Psoas muscle (tissue), 8 donors: ENCODE measurements at regions of chr10 and their contacts with region 1.

Region 1: DNA sequence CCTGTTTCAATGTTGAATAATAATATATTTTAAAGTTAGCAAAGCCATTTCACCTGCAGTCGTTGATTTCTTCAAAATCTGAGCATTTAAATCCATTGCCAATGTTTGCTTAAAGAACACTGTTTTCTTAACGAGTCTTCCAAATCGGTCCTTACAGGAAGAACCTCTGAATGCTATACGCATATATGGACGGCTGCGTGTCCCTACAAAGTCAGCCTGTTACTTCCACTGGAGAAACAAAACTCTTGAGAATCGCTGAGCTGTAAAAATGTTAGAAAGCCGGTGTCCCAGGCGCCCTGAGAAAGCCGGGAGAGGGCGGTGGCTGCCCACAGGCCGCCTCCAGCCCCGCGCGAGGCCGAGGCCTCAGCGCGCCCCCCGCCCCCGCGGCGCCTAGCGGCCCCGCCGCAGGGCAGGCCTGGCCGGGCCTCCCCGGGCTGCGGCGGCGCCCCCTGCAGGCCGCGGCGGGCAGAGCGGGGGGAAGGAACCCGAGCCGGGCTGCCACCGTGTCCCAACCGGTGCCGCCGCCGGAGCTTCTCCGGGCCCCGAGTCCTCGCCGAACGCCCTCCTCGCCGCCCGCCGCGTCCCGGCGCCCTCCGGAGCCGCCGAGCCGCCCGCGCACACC is at the start of gene FHIP2A:
- DNase-seq: peak; percentile 87 to 90
- ATAC-seq: peak; percentile 79 to 94 (median 92)
- H3K4me3 ChIP-seq: peak within 1 kb of the TSS; percentile 93
- H3K27ac ChIP-seq: peak within 1 kb of the TSS; percentile 98
- H3K4me1 ChIP-seq: peaks cover 30% of the 10 kb centered on the region
- H3K27me3 ChIP-seq: no peaks in the 10 kb centered on the region
- CTCF ChIP-seq: peak; percentile 83
- total RNA-seq, gene FHIP2A: 19.9 to 31.9 (median 26.0) TPM

Region 2: GRCh38 chr10:114937962-114938855 is 116.8 kb after region 1 on chr10 and contains the start of gene TRUB1:
- intact Hi-C with region 1: loop called in 1 of 2 experiments (anchors 10 kb)
- DNase-seq: peak; percentile 92 to 95
- ATAC-seq: peak; percentile 97 to 99 (median 98)
- H3K4me3 ChIP-seq: peak within 1 kb of the TSS; percentile 91
- H3K27ac ChIP-seq: peak within 1 kb of the TSS; percentile 89
- H3K4me1 ChIP-seq: peaks cover 38% of the 10 kb centered on the region
- H3K27me3 ChIP-seq: no peaks in the 10 kb centered on the region
- CTCF ChIP-seq: no peak
- total RNA-seq, gene TRUB1: 5.4 to 8.8 (median 8.5) TPM

Region 3: GRCh38 chr10:114970515-114970914 is 149.1 kb after region 1 on chr10:
- intact Hi-C with region 1: no loop called
- DNase-seq: no peak
- ATAC-seq: peak; percentile 85 to 95 (median 93)
- H3K4me3 ChIP-seq: no peak overlapping the region
- H3K27ac ChIP-seq: peak overlapping the region; percentile 52
- H3K4me1 ChIP-seq: peaks cover 10% of the 10 kb centered on the region
- H3K27me3 ChIP-seq: no peaks in the 10 kb centered on the region
- CTCF ChIP-seq: no peak